Activated CD4-positive, alpha-beta T cell treated with anti-CD3 and anti-CD28 coated beads for 36 hours (primary cell): ENCODE measurements at regions of chr1 and their contacts with region 1.

Region 1: GRCh38 chr1:28144203-28145135 is 32.0 kb downstream of the PTAFR start:
- DNase-seq: peak; percentile 68
- ATAC-seq: peak; percentile 97
- H3K4me3 Mint-ChIP-seq: no peak overlapping the region
- H3K27ac Mint-ChIP-seq: peak overlapping the region; percentile 34
- H3K4me1 Mint-ChIP-seq: peaks cover 19% of the 10 kb centered on the region
- H3K27me3 Mint-ChIP-seq: peaks cover 18% of the 10 kb centered on the region

Region 2: DNA sequence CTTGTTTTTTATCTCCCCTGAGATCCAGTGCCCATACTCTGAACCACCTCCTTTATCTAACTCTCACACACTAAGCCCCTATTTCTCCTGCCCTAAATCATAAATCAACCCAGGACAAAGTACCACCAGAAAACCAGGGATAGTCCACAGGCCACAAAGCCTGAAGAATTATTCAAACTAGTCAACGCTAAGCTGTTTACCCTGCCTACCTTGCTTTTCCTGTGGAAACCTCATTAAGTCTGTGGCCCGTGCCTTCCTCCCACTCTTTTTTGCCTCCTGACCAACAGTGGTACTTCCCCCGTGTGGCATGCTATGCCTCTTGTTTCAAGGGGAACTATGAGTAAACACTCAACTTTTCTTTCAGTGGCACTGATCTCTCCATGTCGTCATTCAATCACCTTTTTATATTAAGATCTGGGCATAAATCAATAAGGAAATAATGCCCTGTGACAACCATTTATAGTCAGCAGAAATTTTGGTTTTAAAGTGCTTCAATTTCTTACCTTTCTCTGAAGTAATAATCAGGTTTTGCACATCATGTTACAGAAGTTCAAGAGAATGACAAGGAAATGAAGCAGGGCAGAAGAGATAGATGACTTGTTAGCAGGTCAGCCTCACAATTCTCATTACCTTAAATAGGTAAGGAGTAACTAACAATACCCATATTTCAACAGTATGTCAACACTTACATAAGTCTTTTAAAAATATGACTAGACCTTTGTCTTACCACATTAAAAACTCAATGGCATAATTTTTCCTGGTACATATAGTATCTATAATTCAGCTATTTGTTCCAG is 88.1 kb before region 1 on chr1:
- CTCF ChIA-PET with region 1: interaction called, 3 read pairs
- POLR2A ChIA-PET with region 1: no interaction called
- intact Hi-C with region 1: loop called in 1 of 2 experiments (anchors 1 kb)
- DNase-seq: peak; percentile 85
- ATAC-seq: peak; percentile 85
- H3K4me3 Mint-ChIP-seq: peak overlapping the region; percentile 1
- H3K27ac Mint-ChIP-seq: peak overlapping the region; percentile 83
- H3K4me1 Mint-ChIP-seq: peaks cover 47% of the 10 kb centered on the region
- H3K27me3 Mint-ChIP-seq: no peaks in the 10 kb centered on the region

Region 3: GRCh38 chr1:28115267-28115666 is 29.2 kb before region 1 on chr1:
- CTCF ChIA-PET with region 1: interaction called, 3 read pairs
- POLR2A ChIA-PET with region 1: no interaction called
- intact Hi-C with region 1: loop called in 1 of 2 experiments (anchors 2 kb)
- DNase-seq: peak; percentile 67
- ATAC-seq: peak; percentile 60
- H3K4me3 Mint-ChIP-seq: no peak overlapping the region
- H3K27ac Mint-ChIP-seq: no peak overlapping the region
- H3K4me1 Mint-ChIP-seq: peaks cover 9% of the 10 kb centered on the region
- H3K27me3 Mint-ChIP-seq: peaks cover 9% of the 10 kb centered on the region

Region 4: DNA sequence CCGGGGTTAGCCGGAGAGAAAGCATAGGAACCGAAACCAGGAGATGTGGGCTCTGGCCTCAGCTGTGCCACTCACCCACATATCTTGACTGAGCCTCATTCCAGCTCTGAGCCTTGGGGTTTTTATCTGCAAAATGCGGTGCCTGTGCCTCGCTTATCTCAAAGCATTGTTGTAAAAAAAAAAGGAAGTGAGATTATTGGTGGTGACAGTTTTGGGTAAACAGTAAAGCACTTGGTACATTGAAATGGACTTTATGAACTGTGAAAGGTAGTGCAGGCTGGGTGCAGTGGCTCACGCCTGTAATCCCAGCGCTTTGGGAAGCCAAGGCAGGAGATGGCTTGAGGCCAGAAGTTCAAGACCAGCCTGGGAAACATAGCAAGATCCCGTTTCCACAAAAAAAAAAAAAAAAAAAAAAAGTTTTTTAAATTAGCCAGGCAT is 28.3 kb after region 1 on chr1:
- CTCF ChIA-PET with region 1: interaction called, 3 read pairs
- POLR2A ChIA-PET with region 1: interaction called, 7 read pairs
- intact Hi-C with region 1: loop called (anchors 1 kb)
- DNase-seq: peak; percentile 60
- ATAC-seq: peak; percentile 23
- H3K4me3 Mint-ChIP-seq: no peak overlapping the region
- H3K27ac Mint-ChIP-seq: no peak overlapping the region
- H3K4me1 Mint-ChIP-seq: peaks cover 50% of the 10 kb centered on the region
- H3K27me3 Mint-ChIP-seq: peaks cover 46% of the 10 kb centered on the region

Region 5: DNA sequence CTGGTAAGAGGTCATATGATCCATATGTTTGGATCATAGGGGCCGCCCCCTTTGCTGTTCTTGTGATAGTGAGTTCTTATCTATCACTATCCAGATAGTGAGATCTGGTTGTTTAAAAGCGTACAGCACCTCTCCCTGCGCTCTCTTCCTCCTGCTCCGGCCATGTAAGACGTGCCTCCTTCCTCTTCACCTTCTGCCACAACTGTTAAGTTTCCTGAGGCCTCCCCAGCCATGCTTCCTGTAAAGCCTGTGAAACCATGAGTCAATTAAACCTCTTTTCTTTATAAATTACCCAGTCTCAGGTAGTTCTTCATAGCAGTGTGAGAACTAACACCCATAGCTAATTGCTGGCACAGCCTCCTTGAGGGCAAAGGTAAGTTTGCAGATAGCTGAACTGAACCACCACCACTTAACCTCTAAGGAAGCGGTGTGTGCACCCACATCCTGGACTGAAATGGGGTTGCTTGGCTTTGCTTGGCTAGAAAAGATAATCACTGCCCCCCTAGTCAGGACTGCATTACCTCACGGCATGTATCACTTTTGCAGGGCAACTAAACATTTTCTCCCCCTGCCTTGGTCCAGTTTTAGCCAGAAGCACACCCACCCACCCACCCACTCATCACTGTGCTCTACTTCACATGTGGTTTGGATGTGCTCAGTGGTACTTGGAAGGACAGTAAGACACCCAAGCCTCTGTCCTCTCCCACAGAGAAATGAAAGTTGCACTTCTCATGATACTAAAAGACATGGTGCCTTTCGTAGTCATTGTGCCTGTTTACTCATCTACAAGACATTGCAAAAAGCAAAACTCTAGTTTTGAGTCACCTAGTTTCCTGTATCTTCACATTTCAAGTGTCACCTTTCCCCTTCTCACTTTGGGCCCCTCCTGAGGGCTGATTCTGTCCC is 55.1 kb after region 1 on chr1:
- CTCF ChIA-PET with region 1: no interaction called
- POLR2A ChIA-PET with region 1: no interaction called
- intact Hi-C with region 1: loop called (anchors 1 kb)
- DNase-seq: peak; percentile 84
- ATAC-seq: peak; percentile 92
- H3K4me3 Mint-ChIP-seq: peak overlapping the region; percentile 37
- H3K27ac Mint-ChIP-seq: peak overlapping the region; percentile 89
- H3K4me1 Mint-ChIP-seq: peaks cover 47% of the 10 kb centered on the region
- H3K27me3 Mint-ChIP-seq: no peaks in the 10 kb centered on the region

Region 6: GRCh38 chr1:28259307-28260167 is 115.1 kb after region 1 on chr1 and contains the start of gene SESN2:
- CTCF ChIA-PET with region 1: no interaction called
- POLR2A ChIA-PET with region 1: no interaction called
- intact Hi-C with region 1: loop called in 1 of 2 experiments (anchors 1 kb)
- DNase-seq: peak; percentile 100
- ATAC-seq: peak; percentile 93
- H3K4me3 Mint-ChIP-seq: peak within 1 kb of the TSS; percentile 81
- H3K27ac Mint-ChIP-seq: peak within 1 kb of the TSS; percentile 99
- H3K4me1 Mint-ChIP-seq: peaks cover 42% of the 10 kb centered on the region
- H3K27me3 Mint-ChIP-seq: no peaks in the 10 kb centered on the region
- total RNA-seq, gene SESN2: 32.9 to 33.3 TPM

Region 7: GRCh38 chr1:28956038-28956464 is 811.6 kb after region 1 on chr1:
- CTCF ChIA-PET with region 1: no interaction called
- POLR2A ChIA-PET with region 1: no interaction called
- intact Hi-C with region 1: loop called in 1 of 2 experiments (anchors 5 kb)
- DNase-seq: peak; percentile 39
- ATAC-seq: peak; percentile 95
- H3K4me3 Mint-ChIP-seq: no peak overlapping the region
- H3K27ac Mint-ChIP-seq: peak overlapping the region; percentile 32
- H3K4me1 Mint-ChIP-seq: peaks cover 47% of the 10 kb centered on the region
- H3K27me3 Mint-ChIP-seq: no peaks in the 10 kb centered on the region